Left lung (tissue), 14 donors: ENCODE measurements at regions of chr10 and their contacts with region 1.

Region 1: GRCh38 chr10:68156373-68157185 is 47.3 kb downstream of the MYPN start:
- DNase-seq: peak in 3 of 4 donors; percentile 38 to 82 (median 50)
- ATAC-seq: peak; percentile 84
- H3K4me3 ChIP-seq: no peak overlapping the region
- H3K27ac ChIP-seq: no peak overlapping the region
- H3K4me1 ChIP-seq: peaks cover 0 to 9% of the 10 kb centered on the region in 2 donors
- H3K27me3 ChIP-seq: no peaks in the 10 kb centered on the region
- CTCF ChIP-seq: peak; percentile 75 to 79

Region 2: GRCh38 chr10:67858971-67859370 is 297.6 kb before region 1 on chr10:
- intact Hi-C with region 1: loop called in 1 of 2 experiments (anchors 5 kb)
- DNase-seq: no peak
- ATAC-seq: no peak
- H3K4me3 ChIP-seq: no peak overlapping the region
- H3K27ac ChIP-seq: no peak overlapping the region
- H3K4me1 ChIP-seq: peaks cover 0 to 4% of the 10 kb centered on the region in 2 donors
- H3K27me3 ChIP-seq: no peaks in the 10 kb centered on the region
- CTCF ChIP-seq: no peak

Region 3: GRCh38 chr10:67988606-67989005 is 168.0 kb before region 1 on chr10:
- intact Hi-C with region 1: no loop called
- DNase-seq: no peak
- ATAC-seq: no peak
- H3K4me3 ChIP-seq: no peak overlapping the region
- H3K27ac ChIP-seq: no peak overlapping the region
- H3K4me1 ChIP-seq: no peaks in the 10 kb centered on the region
- H3K27me3 ChIP-seq: no peaks in the 10 kb centered on the region
- CTCF ChIP-seq: no peak

Region 4: DNA sequence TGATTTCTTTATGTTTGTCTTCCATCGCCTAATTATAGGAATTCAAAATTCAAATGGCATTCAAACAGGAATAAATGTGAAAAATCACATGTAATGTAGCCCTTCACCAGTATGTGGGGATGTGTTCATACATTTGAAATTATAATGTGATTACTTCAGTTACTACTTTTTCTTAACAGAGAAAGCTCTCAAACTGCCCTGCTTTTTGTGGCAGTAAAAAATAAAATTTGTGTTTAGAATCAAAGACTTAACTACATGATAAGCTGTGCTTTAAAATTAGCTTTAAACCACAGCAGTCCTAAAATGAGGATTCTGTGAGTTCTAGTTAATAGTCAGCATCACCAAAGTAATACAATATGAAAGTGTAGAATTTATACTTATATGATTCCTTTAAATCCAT is 73.7 kb before region 1 on chr10:
- intact Hi-C with region 1: loop called in 1 of 2 experiments (anchors 10 kb)
- DNase-seq: peak in 1 of 4 donors; percentile 35
- ATAC-seq: no peak
- H3K4me3 ChIP-seq: no peak overlapping the region
- H3K27ac ChIP-seq: no peak overlapping the region
- H3K4me1 ChIP-seq: no peaks in the 10 kb centered on the region
- H3K27me3 ChIP-seq: no peaks in the 10 kb centered on the region
- CTCF ChIP-seq: no peak